Activated naive CD4-positive, alpha-beta T cell treated with anti-CD3 and anti-CD28 coated beads for 36 hours (primary cell): ENCODE measurements at regions of chr10 and their contacts with region 1.

Region 1: DNA sequence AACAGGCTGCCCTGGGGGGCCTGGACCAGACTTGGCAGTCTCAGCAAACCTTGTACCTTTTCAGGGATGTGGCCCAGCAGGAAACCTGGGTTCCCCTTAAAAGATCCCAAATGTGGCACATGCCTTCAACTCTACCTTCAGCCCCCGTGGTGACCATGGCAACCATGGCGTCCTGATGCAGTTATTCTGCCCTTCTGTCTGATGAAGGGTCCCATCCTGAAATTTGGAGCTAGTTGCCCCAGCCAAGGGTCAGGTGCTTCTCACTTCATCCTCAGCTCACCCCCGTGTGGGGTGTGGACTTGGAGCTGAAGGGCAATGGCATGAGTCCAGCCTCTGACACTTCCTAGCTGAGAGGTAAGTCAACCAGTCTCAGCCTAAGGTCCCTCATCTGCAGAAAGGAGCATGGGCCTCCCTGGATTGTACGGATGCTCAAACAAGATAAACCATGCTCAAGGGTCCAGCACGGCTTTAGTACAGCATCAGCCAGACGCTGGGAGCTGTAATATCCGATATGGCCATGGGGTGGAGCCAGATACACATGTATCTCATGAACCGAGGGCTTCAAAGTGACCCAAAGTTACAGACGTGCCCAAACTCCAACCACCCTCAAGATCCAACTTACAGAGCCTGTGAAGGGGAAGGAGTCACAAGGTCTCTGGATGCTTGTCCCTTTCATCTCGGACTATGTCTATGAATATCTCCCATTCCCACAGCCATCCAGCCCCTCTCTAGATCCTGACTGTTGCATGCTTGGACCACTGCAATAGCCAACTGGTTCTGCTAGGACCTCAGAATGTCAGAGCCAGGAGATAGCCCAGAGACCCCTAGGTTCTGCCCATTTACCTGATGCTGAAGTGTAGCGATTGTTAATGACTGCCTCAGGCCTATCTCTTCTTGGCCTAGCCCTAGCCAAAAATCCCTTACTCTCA is 142.5 kb downstream of the SH3PXD2A start:
- DNase-seq: peak; percentile 92
- H3K4me3 Mint-ChIP-seq: no peak overlapping the region
- H3K27ac Mint-ChIP-seq: no peak overlapping the region
- H3K4me1 Mint-ChIP-seq: no peaks in the 10 kb centered on the region
- H3K27me3 Mint-ChIP-seq: no peaks in the 10 kb centered on the region

Region 2: DNA sequence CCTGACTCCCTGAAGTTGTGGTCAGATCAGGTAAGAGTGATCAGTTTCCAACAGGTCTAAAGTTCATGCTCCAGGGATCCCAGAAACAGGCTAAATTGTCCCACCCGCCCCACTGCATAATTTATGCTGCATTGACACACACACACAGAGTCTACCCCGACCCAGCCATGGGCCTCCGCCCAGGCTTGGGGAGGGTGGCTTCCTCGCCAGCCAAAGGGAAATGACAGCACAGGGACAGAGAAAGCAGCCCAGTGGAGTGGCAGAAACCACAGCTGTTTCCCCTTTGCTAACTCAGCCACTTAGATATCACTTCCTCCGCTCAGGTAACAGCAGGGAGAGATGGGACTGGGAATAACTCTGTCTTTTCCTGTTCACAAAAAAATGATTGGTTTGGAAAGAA is 133.1 kb after region 1 on chr10:
- CTCF ChIA-PET with region 1: interaction called, 26 read pairs
- intact Hi-C with region 1: no loop called
- DNase-seq: peak; percentile 61
- H3K4me3 Mint-ChIP-seq: no peak overlapping the region
- H3K27ac Mint-ChIP-seq: no peak overlapping the region
- H3K4me1 Mint-ChIP-seq: peaks cover 17% of the 10 kb centered on the region
- H3K27me3 Mint-ChIP-seq: no peaks in the 10 kb centered on the region

Region 3: GRCh38 chr10:103852189-103852711 is 139.4 kb after region 1 on chr10:
- CTCF ChIA-PET with region 1: interaction called, 51 read pairs
- intact Hi-C with region 1: no loop called
- DNase-seq: no peak
- H3K4me3 Mint-ChIP-seq: no peak overlapping the region
- H3K27ac Mint-ChIP-seq: no peak overlapping the region
- H3K4me1 Mint-ChIP-seq: peaks cover 3% of the 10 kb centered on the region
- H3K27me3 Mint-ChIP-seq: peaks cover 29% of the 10 kb centered on the region

Region 4: DNA sequence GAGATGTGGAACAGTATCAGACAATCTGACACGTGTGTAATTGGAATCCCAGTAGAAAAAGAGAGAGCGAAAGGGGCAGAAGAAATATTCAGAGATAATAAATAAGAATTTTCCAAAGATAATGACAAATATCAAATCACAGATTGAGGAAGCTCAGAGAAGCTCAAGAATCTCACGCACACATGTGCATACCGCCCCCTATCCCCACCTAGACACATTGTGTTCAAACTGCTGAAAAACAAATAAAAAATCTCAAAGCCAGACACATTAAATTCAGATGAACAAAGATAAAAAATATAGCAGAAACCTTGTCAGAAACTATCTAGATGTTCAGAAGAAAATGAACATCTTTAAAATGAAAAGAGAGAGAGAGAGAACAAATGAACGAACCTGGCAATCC is 426.4 kb after region 1 on chr10:
- CTCF ChIA-PET with region 1: interaction called, 4 read pairs
- intact Hi-C with region 1: loop called (anchors 1 kb)
- DNase-seq: no peak
- H3K4me3 Mint-ChIP-seq: no peak overlapping the region
- H3K27ac Mint-ChIP-seq: no peak overlapping the region
- H3K4me1 Mint-ChIP-seq: no peaks in the 10 kb centered on the region
- H3K27me3 Mint-ChIP-seq: peaks cover 2% of the 10 kb centered on the region

Region 5: DNA sequence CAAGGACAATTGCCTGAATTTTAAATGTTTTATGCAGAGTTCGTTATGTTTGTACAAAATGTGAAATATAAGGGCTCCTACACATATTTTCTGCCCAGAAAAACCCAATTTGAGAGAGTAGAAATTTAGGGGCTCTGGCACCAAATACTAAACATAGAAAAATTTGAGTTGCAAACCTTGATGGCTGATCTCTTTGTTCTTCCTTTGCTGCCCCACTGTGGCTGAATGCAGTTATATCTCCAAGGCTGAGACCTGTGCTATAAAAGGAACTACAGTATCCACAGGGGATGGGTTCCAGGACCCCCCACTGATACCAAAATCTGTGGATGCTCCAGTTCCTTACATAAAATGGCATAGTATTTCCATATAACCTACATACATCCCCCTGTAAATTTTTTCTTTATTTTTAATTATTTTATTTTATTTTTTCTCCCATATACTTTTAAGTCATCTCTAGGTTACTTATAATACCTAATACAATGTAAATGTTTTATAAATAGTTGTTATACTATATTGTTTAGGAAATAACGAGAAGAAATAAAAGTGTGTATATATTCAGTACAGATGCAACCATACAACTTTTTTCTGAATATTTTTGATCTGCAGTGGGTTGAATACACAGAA is 496.9 kb after region 1 on chr10:
- CTCF ChIA-PET with region 1: no interaction called
- intact Hi-C with region 1: loop called (anchors 1 kb)
- DNase-seq: peak; percentile 67
- H3K4me3 Mint-ChIP-seq: no peak overlapping the region
- H3K27ac Mint-ChIP-seq: no peak overlapping the region
- H3K4me1 Mint-ChIP-seq: no peaks in the 10 kb centered on the region
- H3K27me3 Mint-ChIP-seq: no peaks in the 10 kb centered on the region